ENCODE measurements at regions of chr3 and their contacts with region 1.

Region 1: GRCh38 chr3:115692887-115693524 is 69.7 kb downstream of the GAP43 start:
- DNase-seq: peak; percentile 74
- H3K4me3 ChIP-seq: peak overlapping the region in 1 of 2 experiments; percentile 36; a peak in 1 of 4 replicates
- H3K27ac ChIP-seq: peak overlapping the region; percentile 5 to 98; a peak in 3 of 4 replicates
- H3K4me1 ChIP-seq: peaks cover 0 to 16% of the 10 kb centered on the region in 2 experiments; a peak in 3 of 4 replicates
- H3K27me3 ChIP-seq: no peaks in the 10 kb centered on the region
- CTCF ChIP-seq: peak; percentile 86
- EP300 ChIP-seq: peak in 1 of 2 experiments; percentile 6; a peak in 1 of 4 replicates
- RAD21 ChIP-seq: peak; percentile 99

Region 2: GRCh38 chr3:114565216-114565615 is 1127.8 kb before region 1 on chr3:
- CTCF ChIA-PET with region 1: no interaction called
- POLR2A ChIA-PET with region 1: no interaction called
- DNase-seq: no peak
- H3K4me3 ChIP-seq: no peak overlapping the region
- H3K27ac ChIP-seq: no peak overlapping the region; a peak in 1 of 4 replicates
- H3K4me1 ChIP-seq: peaks cover 0 to 10% of the 10 kb centered on the region in 2 experiments; a peak in 2 of 4 replicates
- H3K27me3 ChIP-seq: no peaks in the 10 kb centered on the region
- CTCF ChIP-seq: no peak
- EP300 ChIP-seq: no peak
- RAD21 ChIP-seq: no peak

Region 3: GRCh38 chr3:115623044-115623868 is 69.8 kb before region 1 on chr3 and contains the start of gene GAP43:
- CTCF ChIA-PET with region 1: interaction called, 13 read pairs
- POLR2A ChIA-PET with region 1: no interaction called
- DNase-seq: peak; percentile 51
- H3K4me3 ChIP-seq: peak within 1 kb of the TSS; percentile 49 to 63
- H3K27ac ChIP-seq: peak within 1 kb of the TSS in 1 of 2 experiments; percentile 56; a peak in 1 of 4 replicates
- H3K4me1 ChIP-seq: peaks cover 10 to 11% of the 10 kb centered on the region in 2 experiments; a peak in 3 of 4 replicates
- H3K27me3 ChIP-seq: no peaks in the 10 kb centered on the region
- CTCF ChIP-seq: no peak; the same call in 1 of the 2 replicates
- EP300 ChIP-seq: no peak
- RAD21 ChIP-seq: peak; percentile 38
- polyA plus RNA-seq, gene GAP43: 13.6 and 14.0 TPM in 2 replicates

Region 4: DNA sequence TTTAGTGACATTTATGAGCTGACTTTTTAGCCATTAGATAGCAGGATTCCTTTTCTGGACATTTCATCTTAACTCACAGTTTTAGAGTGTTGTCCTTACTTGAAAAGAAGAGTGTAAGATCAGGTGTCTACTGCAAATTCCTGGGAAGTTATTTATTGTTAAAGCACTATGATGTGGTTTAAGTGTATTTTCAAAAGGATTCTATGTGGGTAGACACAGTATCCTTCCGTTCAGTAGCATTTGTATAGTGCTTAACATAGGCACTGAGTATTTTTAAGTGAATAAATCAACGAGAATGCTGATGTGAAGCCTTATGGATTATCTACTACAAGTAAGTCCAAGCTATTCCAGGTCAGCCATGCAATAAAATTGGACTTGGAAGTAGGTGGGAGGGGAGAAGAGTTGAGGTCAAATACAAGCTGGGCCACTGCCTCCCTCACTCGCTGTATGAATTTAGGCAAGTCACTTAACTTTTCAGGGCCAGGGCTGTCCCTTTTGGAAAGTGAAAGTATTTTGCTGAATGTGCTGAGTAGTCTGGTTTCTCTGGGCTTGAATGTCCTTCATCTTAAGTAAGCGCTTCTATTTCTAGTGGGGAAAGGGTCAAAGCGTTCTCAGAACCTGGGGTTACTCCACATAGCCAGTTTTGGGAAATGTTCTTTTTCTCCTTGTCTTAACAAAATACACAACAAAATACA is 21.1 kb before region 1 on chr3:
- CTCF ChIA-PET with region 1: interaction called, 10 read pairs
- POLR2A ChIA-PET with region 1: no interaction called
- DNase-seq: no peak
- H3K4me3 ChIP-seq: no peak overlapping the region
- H3K27ac ChIP-seq: no peak overlapping the region; a peak in 1 of 4 replicates
- H3K4me1 ChIP-seq: peaks cover 0 to 2% of the 10 kb centered on the region in 2 experiments; a peak in 2 of 4 replicates
- H3K27me3 ChIP-seq: no peaks in the 10 kb centered on the region
- CTCF ChIP-seq: no peak
- EP300 ChIP-seq: no peak
- RAD21 ChIP-seq: no peak

Region 5: GRCh38 chr3:115713284-115713683 is 20.3 kb after region 1 on chr3:
- CTCF ChIA-PET with region 1: interaction called, 15 read pairs
- POLR2A ChIA-PET with region 1: interaction called, 11 read pairs
- DNase-seq: peak; percentile 73
- H3K4me3 ChIP-seq: 0 out of 4 replicates have a peak overlapping the region, but pooled peaks of 1 of the 2 experiments have one; percentile 3
- H3K27ac ChIP-seq: peak overlapping the region; percentile 63 to 99
- H3K4me1 ChIP-seq: peaks cover 34 to 53% of the 10 kb centered on the region in 2 experiments; a peak in 3 of 4 replicates
- H3K27me3 ChIP-seq: no peaks in the 10 kb centered on the region
- CTCF ChIP-seq: no peak
- EP300 ChIP-seq: peak in 1 of 2 experiments; percentile 82; a peak in 2 of 4 replicates
- RAD21 ChIP-seq: peak; percentile 37

Region 6: DNA sequence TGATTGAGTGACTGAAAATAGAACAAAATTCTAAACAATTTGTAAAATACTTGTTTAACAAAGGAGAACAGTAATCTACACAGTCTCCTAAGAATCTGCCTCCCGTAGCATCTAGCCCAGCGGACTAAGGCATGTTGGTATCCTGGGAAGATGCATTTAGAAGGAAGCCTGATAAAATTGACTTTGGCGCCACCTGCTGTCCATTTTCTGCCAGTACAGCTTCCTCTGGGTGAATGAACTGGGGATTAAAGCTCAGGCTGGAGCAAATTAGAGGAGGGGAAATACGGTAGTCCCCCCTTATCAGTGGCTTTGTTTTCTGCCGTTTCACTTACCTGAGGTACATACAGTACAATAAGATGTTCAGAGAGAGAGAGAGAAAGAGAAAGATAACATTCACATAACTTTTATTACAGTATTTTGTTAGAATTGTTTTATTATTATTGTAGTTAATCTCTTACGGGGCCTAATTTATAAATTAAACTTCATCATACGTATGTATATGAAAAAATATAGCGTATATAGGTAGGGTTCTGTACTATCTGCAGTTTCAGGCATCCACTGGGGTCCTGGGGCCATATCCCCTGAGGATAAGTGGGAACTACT is 121.9 kb after region 1 on chr3:
- CTCF ChIA-PET with region 1: interaction called, 15 read pairs
- POLR2A ChIA-PET with region 1: interaction called, 5 read pairs
- DNase-seq: peak; percentile 68
- H3K4me3 ChIP-seq: no peak overlapping the region; a peak in 1 of 4 replicates
- H3K27ac ChIP-seq: no peak overlapping the region
- H3K4me1 ChIP-seq: no peaks in the 10 kb centered on the region
- H3K27me3 ChIP-seq: no peaks in the 10 kb centered on the region
- CTCF ChIP-seq: peak; percentile 95
- EP300 ChIP-seq: no peak
- RAD21 ChIP-seq: peak; percentile 91

Measured in SK-N-SH (cell line).